ENCODE measurements at regions of chr7 and their contacts with region 1.

Region 1: GRCh38 chr7:87886875-87887274 is 10.6 kb downstream of the DBF4 start:
- DNase-seq: peak; percentile 56
- ATAC-seq: no peak; the same call in 1 of the 2 replicates
- H3K4me3 ChIP-seq: no peak overlapping the region
- H3K27ac ChIP-seq: no peak overlapping the region
- H3K4me1 ChIP-seq: no peaks in the 10 kb centered on the region
- H3K27me3 ChIP-seq: no peaks in the 10 kb centered on the region
- CTCF ChIP-seq: peak; percentile 59
- POLR2A ChIP-seq: no peak
- RAD21 ChIP-seq: peak; percentile 65

Region 2: GRCh38 chr7:86939197-86939814 is 947.6 kb before region 1 on chr7:
- CTCF ChIA-PET with region 1: no interaction called
- POLR2A ChIA-PET with region 1: no interaction called
- dilution Hi-C with region 1: no loop called
- in situ Hi-C with region 1: no loop called
- intact Hi-C with region 1: loop called (anchors 10 kb)
- DNase-seq: peak; percentile 60
- ATAC-seq: peak; percentile 85
- H3K4me3 ChIP-seq: no peak overlapping the region
- H3K27ac ChIP-seq: no peak overlapping the region
- H3K4me1 ChIP-seq: no peaks in the 10 kb centered on the region
- H3K27me3 ChIP-seq: no peaks in the 10 kb centered on the region
- CTCF ChIP-seq: peak; percentile 62
- POLR2A ChIP-seq: no peak
- RAD21 ChIP-seq: peak; percentile 50

Region 3: GRCh38 chr7:87506246-87507180 is 380.4 kb before region 1 on chr7:
- CTCF ChIA-PET with region 1: interaction called, 4 read pairs
- POLR2A ChIA-PET with region 1: no interaction called
- dilution Hi-C with region 1: no loop called
- in situ Hi-C with region 1: loop called (anchors 10 kb)
- intact Hi-C with region 1: loop called (anchors 1 kb)
- DNase-seq: peak; percentile 43
- ATAC-seq: peak; percentile 57; the same call in 1 of the 2 replicates
- H3K4me3 ChIP-seq: no peak overlapping the region
- H3K27ac ChIP-seq: no peak overlapping the region
- H3K4me1 ChIP-seq: peaks cover 3% of the 10 kb centered on the region; the same call in 1 of the 2 replicates
- H3K27me3 ChIP-seq: peaks cover 2% of the 10 kb centered on the region; the same call in 1 of the 2 replicates
- CTCF ChIP-seq: peak; percentile 70
- POLR2A ChIP-seq: no peak
- RAD21 ChIP-seq: peak; percentile 68

Region 4: GRCh38 chr7:87797798-87798403 is 89.0 kb before region 1 on chr7:
- CTCF ChIA-PET with region 1: interaction called, 5 read pairs
- POLR2A ChIA-PET with region 1: no interaction called
- dilution Hi-C with region 1: no loop called
- in situ Hi-C with region 1: loop called (anchors 5 kb)
- intact Hi-C with region 1: loop called (anchors 1 kb)
- DNase-seq: peak; percentile 47
- ATAC-seq: peak; percentile 79
- H3K4me3 ChIP-seq: no peak overlapping the region
- H3K27ac ChIP-seq: no peak overlapping the region
- H3K4me1 ChIP-seq: no peaks in the 10 kb centered on the region
- H3K27me3 ChIP-seq: no peaks in the 10 kb centered on the region
- CTCF ChIP-seq: peak; percentile 67
- POLR2A ChIP-seq: no peak
- RAD21 ChIP-seq: peak; percentile 70

Region 5: DNA sequence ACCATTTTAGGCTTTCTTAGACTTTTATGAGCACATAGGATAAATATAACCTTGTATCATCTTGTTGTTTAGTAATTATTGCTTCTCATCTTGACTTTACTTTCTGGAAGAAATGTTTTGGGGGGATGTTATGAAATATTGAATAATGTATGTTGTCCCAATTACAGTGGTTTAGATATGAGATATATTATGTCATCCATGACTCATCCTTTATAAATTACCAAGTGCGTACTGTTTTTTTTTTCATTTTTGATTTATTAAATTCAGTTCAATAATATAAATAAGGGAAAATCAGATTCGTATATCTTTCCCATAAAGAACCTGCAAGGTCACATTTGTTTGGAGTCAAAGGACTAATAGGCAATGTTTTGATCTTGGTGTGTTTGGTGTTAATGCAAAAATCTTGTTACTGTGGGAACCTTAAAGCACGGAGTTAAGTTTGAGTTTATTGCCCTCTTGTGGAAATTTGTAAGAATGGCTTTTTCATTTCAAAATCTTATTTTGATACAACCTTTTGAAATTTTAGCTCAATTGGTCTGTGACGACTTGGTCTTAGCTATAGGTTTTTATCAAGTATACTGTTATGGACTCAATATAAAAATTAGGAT is 224.4 kb after region 1 on chr7:
- CTCF ChIA-PET with region 1: no interaction called
- POLR2A ChIA-PET with region 1: no interaction called
- dilution Hi-C with region 1: no loop called
- in situ Hi-C with region 1: no loop called
- intact Hi-C with region 1: loop called (anchors 2 kb)
- DNase-seq: peak; percentile 41
- ATAC-seq: peak; percentile 46
- H3K4me3 ChIP-seq: no peak overlapping the region
- H3K27ac ChIP-seq: no peak overlapping the region
- H3K4me1 ChIP-seq: no peaks in the 10 kb centered on the region
- H3K27me3 ChIP-seq: no peaks in the 10 kb centered on the region
- CTCF ChIP-seq: peak; percentile 58
- POLR2A ChIP-seq: no peak
- RAD21 ChIP-seq: peak; percentile 56

Measured in IMR-90 (cell line).